Panc1 (cell line): ENCODE measurements at regions of chr10 and their contacts with region 1.

Region 1: GRCh38 chr10:61992671-61993668 is 91.5 kb downstream of the ARID5B start:
- DNase-seq: no peak
- ATAC-seq: no peak
- H3K4me3 ChIP-seq: no peak overlapping the region
- H3K27ac ChIP-seq: peak overlapping the region; percentile 60; the same call in 1 of the 2 replicates
- H3K4me1 ChIP-seq: peaks cover 44% of the 10 kb centered on the region
- H3K27me3 ChIP-seq: no peaks in the 10 kb centered on the region
- CTCF ChIP-seq: no peak

Region 2: GRCh38 chr10:62050893-62051433 is 58.0 kb after region 1 on chr10:
- CTCF ChIA-PET with region 1: no interaction called
- POLR2A ChIA-PET with region 1: no interaction called
- in situ Hi-C with region 1: no loop called
- intact Hi-C with region 1: no loop called
- DNase-seq: peak; percentile 92
- ATAC-seq: peak; percentile 47
- H3K4me3 ChIP-seq: peak overlapping the region; percentile 40 to 68
- H3K27ac ChIP-seq: peak overlapping the region; percentile 87
- H3K4me1 ChIP-seq: peaks cover 60% of the 10 kb centered on the region
- H3K27me3 ChIP-seq: no peaks in the 10 kb centered on the region
- CTCF ChIP-seq: no peak

Region 3: GRCh38 chr10:62121187-62121530 is 128.2 kb after region 1 on chr10:
- CTCF ChIA-PET with region 1: no interaction called
- POLR2A ChIA-PET with region 1: interaction called, 14 read pairs
- in situ Hi-C with region 1: no loop called
- intact Hi-C with region 1: no loop called
- DNase-seq: no peak
- ATAC-seq: no peak
- H3K4me3 ChIP-seq: no peak overlapping the region
- H3K27ac ChIP-seq: no peak overlapping the region
- H3K4me1 ChIP-seq: no peaks in the 10 kb centered on the region
- H3K27me3 ChIP-seq: no peaks in the 10 kb centered on the region
- CTCF ChIP-seq: no peak